HepG2 (cell line): ENCODE measurements at regions of chr9 and their contacts with region 1.

Region 1: GRCh38 chr9:101418518-101419430 is 16.8 kb downstream of the ALDOB start:
- DNase-seq: no peak
- ATAC-seq: no peak; the same call in 2 of the 3 replicates
- H3K4me3 ChIP-seq: no peak overlapping the region
- H3K27ac ChIP-seq: no peak overlapping the region
- H3K4me1 ChIP-seq: peaks cover 74% of the 10 kb centered on the region
- H3K27me3 ChIP-seq: no peaks in the 10 kb centered on the region
- CTCF ChIP-seq: no peak
- EP300 ChIP-seq: no peak
- POLR2A ChIP-seq: no peak
- RAD21 ChIP-seq: no peak

Region 2: DNA sequence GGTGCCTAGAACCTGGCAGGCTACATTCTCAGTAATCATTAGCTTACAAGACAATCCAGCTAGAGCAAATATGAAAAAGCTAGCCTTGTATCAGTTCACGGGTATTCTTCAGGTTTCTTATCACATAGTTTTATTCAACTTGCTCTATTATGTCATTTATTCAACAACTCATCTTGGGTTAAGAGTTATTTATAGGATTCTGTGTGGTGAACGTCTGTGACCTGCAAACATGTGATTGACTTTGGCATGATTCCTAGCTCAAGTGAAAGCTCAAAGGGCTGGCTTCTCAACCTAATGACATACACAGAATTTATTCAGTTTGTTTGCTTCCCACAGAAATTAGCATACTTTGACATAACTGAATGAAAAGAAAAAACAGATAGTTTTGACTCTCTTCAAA is 217.1 kb before region 1 on chr9:
- CTCF ChIA-PET with region 1: no interaction called
- POLR2A ChIA-PET with region 1: no interaction called
- in situ Hi-C with region 1: no loop called
- intact Hi-C with region 1: no loop called
- DNase-seq: peak; percentile 28
- ATAC-seq: no peak
- H3K4me3 ChIP-seq: no peak overlapping the region
- H3K27ac ChIP-seq: no peak overlapping the region
- H3K4me1 ChIP-seq: peaks cover 13% of the 10 kb centered on the region
- H3K27me3 ChIP-seq: no peaks in the 10 kb centered on the region
- CTCF ChIP-seq: no peak
- EP300 ChIP-seq: no peak
- POLR2A ChIP-seq: no peak
- RAD21 ChIP-seq: no peak

Region 3: DNA sequence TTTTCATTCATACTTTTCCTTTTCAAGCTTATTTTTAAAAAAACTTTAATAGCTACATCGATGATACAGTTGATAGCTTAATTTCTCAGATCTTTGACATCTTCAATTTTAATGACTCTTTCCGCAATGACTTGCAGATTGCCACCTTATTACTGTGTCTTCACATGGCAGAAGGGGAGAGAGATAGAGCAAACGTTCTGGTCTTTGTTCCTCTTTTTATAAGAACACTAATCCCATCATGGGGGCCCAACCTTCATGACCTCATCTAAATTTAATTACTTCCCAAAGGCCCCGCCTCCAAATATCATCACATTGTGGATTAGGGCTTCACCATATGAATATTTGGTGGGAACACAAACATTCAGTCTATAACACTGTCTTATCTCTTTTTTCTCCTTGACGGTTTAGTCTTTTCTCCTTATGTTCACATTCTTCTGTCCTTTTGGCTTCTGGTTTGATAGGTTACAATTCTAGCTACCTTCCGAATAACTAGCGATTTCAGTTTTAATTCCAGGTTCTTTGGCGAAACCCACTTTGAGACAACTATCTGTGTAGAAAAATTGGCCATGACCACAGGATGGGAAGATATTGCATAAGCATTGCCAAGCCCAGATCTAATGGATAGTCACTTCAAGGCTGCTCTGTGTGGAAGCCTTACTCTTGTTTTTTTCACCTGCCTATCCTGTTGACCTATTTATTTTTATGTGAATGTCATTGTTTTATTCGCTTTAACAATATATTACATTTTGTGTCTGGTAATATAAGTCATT is 15.1 kb before region 1 on chr9:
- CTCF ChIA-PET with region 1: no interaction called
- POLR2A ChIA-PET with region 1: interaction called, 23 read pairs
- in situ Hi-C with region 1: no loop called
- intact Hi-C with region 1: loop called (anchors 1 kb)
- DNase-seq: no peak
- ATAC-seq: no peak
- H3K4me3 ChIP-seq: no peak overlapping the region
- H3K27ac ChIP-seq: no peak overlapping the region
- H3K4me1 ChIP-seq: peaks cover 60% of the 10 kb centered on the region
- H3K27me3 ChIP-seq: no peaks in the 10 kb centered on the region; a peak in 1 of 5 replicates
- CTCF ChIP-seq: no peak
- EP300 ChIP-seq: no peak
- POLR2A ChIP-seq: no peak
- RAD21 ChIP-seq: no peak

Region 4: DNA sequence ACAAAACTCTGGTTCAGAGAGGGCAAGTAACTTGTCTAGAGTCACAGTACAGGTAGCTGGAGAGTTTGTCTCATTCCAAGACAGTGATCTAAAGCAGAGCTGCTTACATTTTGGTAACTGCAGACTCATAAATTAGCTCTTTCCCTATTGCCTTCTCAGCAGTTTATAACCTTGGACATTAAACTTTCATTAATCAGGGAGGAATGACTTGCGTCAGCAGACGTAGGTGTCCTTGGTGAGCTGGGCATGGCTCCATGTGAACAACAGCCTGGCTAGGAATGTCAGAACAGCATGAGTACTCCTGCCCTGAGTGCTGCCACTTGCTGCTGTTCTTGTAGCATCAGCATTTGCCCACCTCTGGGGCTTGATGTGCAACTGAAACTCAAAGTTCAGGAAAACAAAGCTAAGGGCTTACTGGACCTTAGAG is 19.0 kb after region 1 on chr9:
- CTCF ChIA-PET with region 1: no interaction called
- POLR2A ChIA-PET with region 1: interaction called, 3 read pairs
- in situ Hi-C with region 1: no loop called
- intact Hi-C with region 1: loop called (anchors 1 kb)
- DNase-seq: peak; percentile 76
- ATAC-seq: peak; percentile 73
- H3K4me3 ChIP-seq: no peak overlapping the region
- H3K27ac ChIP-seq: peak overlapping the region; percentile 34
- H3K4me1 ChIP-seq: peaks cover 97% of the 10 kb centered on the region
- H3K27me3 ChIP-seq: no peaks in the 10 kb centered on the region
- CTCF ChIP-seq: peak; percentile 10; the same call in 1 of the 2 replicates
- EP300 ChIP-seq: no peak
- POLR2A ChIP-seq: no peak
- RAD21 ChIP-seq: no peak